Endothelial cell of umbilical vein (primary cell): ENCODE measurements at regions of chr6 and their contacts with region 1.

Region 1: DNA sequence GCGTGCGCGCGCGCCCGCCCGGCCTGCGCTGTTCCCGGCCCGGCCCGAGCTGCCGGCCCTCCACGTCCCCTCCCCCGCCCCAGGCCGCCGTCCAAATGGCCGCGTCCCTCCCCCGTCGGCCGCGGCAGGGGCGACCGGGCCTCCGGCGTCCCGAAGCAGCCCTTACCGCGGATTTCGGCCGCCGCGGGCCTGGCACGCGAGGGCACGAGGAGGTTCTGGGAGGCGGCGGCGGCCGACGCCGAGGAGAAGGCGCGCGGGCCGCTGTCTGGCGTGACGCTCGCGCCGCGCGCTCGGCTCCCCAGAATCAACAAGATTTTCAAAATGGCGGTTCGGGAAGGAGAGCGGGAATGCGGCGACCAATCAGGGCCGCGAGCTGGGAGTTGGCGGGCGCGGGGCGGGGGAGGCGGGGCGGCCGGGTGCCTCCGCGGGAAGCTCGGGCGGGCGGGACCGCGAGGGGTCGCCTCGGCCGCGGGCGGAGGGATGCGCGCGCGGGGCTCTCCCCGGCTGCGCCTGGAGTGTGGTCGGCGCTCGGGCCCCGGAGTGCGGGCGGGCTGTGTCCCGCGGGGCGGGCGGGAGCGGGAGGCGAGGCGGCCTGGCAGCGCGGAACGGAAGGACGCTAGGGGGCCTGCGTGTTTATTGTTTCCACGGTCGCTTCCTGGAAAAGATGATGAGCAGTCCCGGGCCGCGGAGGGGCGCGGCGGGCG is at the start of gene DEK:
- DNase-seq: peak; percentile 80
- H3K4me3 ChIP-seq: peak within 1 kb of the TSS; percentile 63 to 94 (median 90)
- H3K27ac ChIP-seq: peak within 1 kb of the TSS; percentile 93
- H3K4me1 ChIP-seq: peaks cover 32% of the 10 kb centered on the region
- H3K27me3 ChIP-seq: peaks cover 6 to 8% of the 10 kb centered on the region in 2 experiments
- CTCF ChIP-seq: peak; percentile 26 to 50
- POLR2A ChIP-seq: peak; percentile 46
- total RNA-seq, gene DEK: 118 and 120 TPM in 2 replicates

Region 2: DNA sequence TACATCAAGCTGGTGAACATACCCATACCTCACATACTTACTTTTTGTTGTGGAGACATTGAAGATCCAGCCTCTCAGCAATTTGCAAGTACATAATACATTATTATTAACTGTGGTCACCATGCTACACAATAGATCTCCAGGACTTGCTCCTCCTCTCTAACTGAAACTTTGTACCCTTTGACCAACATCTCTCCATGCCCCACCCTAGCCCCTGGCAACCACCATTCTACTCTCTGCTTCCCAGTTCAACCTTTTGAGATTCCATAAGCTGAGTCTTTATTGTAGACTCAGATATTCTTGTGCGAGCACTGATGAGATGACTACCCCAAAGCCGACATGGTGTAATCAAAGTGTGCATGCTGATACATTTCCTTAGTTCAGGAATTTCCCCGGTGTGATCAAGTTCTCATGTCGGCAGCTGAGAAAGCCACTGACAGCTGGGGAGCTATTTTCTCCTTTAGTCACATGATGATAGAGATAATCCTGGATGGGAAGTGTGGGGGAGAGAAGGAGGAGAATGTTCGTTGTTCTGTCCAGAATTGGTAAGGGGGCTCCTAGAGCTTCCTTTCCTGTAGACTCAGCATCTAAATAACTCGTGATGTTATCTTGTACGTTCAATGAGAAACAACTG is 878.8 kb before region 1 on chr6:
- CTCF ChIA-PET with region 1: no interaction called
- POLR2A ChIA-PET with region 1: no interaction called
- dilution Hi-C with region 1: no loop called
- intact Hi-C with region 1: loop called (anchors 5 kb)
- DNase-seq: no peak
- H3K4me3 ChIP-seq: no peak overlapping the region
- H3K27ac ChIP-seq: no peak overlapping the region
- H3K4me1 ChIP-seq: no peaks in the 10 kb centered on the region
- H3K27me3 ChIP-seq: no peaks in the 10 kb centered on the region
- CTCF ChIP-seq: no peak
- POLR2A ChIP-seq: no peak

Region 3: GRCh38 chr6:18155150-18155863 is 109.1 kb before region 1 on chr6 and contains the start of gene KDM1B:
- CTCF ChIA-PET with region 1: no interaction called
- POLR2A ChIA-PET with region 1: no interaction called
- dilution Hi-C with region 1: no loop called
- intact Hi-C with region 1: loop called (anchors 1 kb)
- DNase-seq: peak; percentile 98
- H3K4me3 ChIP-seq: peak within 1 kb of the TSS; percentile 91 to 95 (median 92)
- H3K27ac ChIP-seq: peak within 1 kb of the TSS; percentile 71
- H3K4me1 ChIP-seq: peaks cover 19% of the 10 kb centered on the region
- H3K27me3 ChIP-seq: no peaks in the 10 kb centered on the region
- CTCF ChIP-seq: no peak
- POLR2A ChIP-seq: no peak
- total RNA-seq, gene KDM1B: 9.6 and 10.8 TPM in 2 replicates

Region 4: DNA sequence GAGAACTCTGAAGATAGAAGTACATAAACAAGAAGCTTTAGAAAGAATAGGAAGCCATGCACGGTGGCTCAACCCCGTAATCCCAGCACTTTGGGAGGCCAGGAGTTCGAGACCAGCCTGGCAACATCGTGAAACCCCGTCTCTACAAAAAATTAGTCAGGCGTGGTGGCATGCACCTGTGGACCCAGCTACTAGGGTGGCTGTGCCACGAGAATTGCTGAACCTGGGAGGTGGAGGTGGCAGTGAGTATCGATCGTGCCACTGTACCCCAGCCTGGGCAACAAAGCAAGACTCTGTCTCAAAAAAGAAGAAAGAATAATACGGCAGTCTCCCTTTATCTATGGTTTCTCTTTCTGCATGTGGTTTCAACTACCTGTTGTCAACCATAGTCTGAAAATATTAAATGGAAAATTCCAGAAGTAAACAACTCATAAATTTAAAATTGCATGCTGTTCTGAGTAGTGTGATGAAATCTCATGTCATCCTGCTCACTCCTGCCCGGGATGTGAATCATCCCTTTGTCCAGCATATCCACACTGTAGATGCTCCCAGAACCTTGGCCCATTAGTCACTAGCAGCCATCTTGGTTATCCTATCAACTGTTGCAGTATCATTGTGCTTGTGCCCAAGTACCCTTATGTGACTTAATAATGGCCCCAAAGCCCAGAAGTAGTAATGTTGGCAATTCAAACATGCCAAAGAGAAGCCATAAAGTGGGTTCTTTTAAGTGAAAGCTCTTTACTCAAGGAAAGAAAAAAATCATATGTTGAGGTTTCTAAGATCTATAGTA is 22.1 kb before region 1 on chr6:
- CTCF ChIA-PET with region 1: no interaction called
- POLR2A ChIA-PET with region 1: no interaction called
- dilution Hi-C with region 1: no loop called
- intact Hi-C with region 1: no loop called
- DNase-seq: peak; percentile 56
- H3K4me3 ChIP-seq: no peak overlapping the region
- H3K27ac ChIP-seq: peak overlapping the region; percentile 28
- H3K4me1 ChIP-seq: peaks cover 13% of the 10 kb centered on the region
- H3K27me3 ChIP-seq: no peaks in the 10 kb centered on the region
- CTCF ChIP-seq: no peak
- POLR2A ChIP-seq: no peak

Region 5: GRCh38 chr6:18323935-18324705 is 59.7 kb after region 1 on chr6:
- CTCF ChIA-PET with region 1: no interaction called
- POLR2A ChIA-PET with region 1: no interaction called
- dilution Hi-C with region 1: no loop called
- intact Hi-C with region 1: loop called (anchors 1 kb)
- DNase-seq: peak; percentile 69
- H3K4me3 ChIP-seq: no peak overlapping the region
- H3K27ac ChIP-seq: no peak overlapping the region
- H3K4me1 ChIP-seq: peaks cover 16% of the 10 kb centered on the region
- H3K27me3 ChIP-seq: no peaks in the 10 kb centered on the region
- CTCF ChIP-seq: peak; percentile 48 to 49
- POLR2A ChIP-seq: no peak

Region 6: GRCh38 chr6:18400831-18401446 is 136.6 kb after region 1 on chr6:
- CTCF ChIA-PET with region 1: no interaction called
- POLR2A ChIA-PET with region 1: no interaction called
- dilution Hi-C with region 1: no loop called
- intact Hi-C with region 1: loop called (anchors 2 kb)
- DNase-seq: peak; percentile 92
- H3K4me3 ChIP-seq: no peak overlapping the region
- H3K27ac ChIP-seq: peak overlapping the region; percentile 84
- H3K4me1 ChIP-seq: peaks cover 97% of the 10 kb centered on the region
- H3K27me3 ChIP-seq: no peaks in the 10 kb centered on the region
- CTCF ChIP-seq: no peak
- POLR2A ChIP-seq: peak; percentile 34